Gastrocnemius medialis (tissue), 4 donors: ENCODE measurements at regions of chr3 and their contacts with region 1.

Region 1: GRCh38 chr3:193572426-193572908 is 17.8 kb upstream of the ATP13A4 start:
- DNase-seq: no peak
- ATAC-seq: peak; percentile 66 to 69
- H3K4me3 ChIP-seq: no peak overlapping the region
- H3K27ac ChIP-seq: no peak overlapping the region
- H3K4me1 ChIP-seq: no peaks in the 10 kb centered on the region
- H3K27me3 ChIP-seq: no peaks in the 10 kb centered on the region
- CTCF ChIP-seq: peak; percentile 31 to 75 (median 51)
- POLR2A ChIP-seq: no peak

Region 2: DNA sequence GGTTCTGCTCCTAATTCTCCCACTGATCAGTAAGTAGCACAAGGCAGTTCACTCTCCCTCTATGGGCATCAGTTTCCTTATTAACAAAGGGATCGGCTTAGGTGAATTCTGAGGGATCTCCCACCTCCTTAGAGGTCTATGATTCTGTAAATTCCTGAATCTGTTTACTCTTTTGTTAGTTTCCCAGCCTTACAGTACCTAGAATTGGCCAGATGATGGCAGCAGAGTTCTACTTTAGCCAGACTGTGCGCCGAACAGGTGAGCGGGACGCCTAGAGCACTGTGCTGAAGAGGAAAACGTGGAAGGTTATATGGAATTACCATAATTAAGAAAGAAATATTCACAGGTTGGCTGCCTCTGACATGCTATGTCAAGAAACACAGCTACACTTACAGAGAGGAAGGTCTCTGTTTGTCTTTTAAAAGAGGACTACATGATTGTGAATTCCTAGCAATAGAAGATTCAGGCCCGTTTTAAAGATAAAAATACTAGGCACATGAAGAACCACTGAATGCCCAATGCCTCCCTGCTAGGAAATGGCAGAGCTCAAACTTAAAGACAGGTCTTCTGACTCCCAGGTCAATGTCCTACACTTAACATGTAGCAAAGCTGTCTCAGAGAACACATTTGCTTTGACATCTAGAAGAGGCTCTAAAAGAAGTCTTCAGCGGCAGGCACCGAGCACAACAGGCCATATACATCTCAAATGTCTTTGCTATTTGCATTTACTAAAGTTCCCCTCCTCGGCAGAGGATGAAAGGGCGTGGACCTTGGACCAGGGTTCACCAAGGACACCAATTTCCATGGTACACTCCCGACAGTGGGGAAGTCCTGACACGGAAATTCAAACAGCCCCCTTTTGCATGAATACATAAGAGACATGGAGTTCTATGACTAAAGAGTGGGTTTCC is 1105.0 kb before region 1 on chr3:
- in situ Hi-C with region 1: loop called in 3 of 4 experiments (anchors 10 to 25 kb)
- intact Hi-C with region 1: no loop called
- DNase-seq: peak; percentile 11 to 19
- ATAC-seq: peak; percentile 62 to 74
- H3K4me3 ChIP-seq: no peak overlapping the region
- H3K27ac ChIP-seq: no peak overlapping the region
- H3K4me1 ChIP-seq: no peaks in the 10 kb centered on the region
- H3K27me3 ChIP-seq: no peaks in the 10 kb centered on the region
- CTCF ChIP-seq: peak; percentile 61 to 90 (median 73)
- POLR2A ChIP-seq: no peak

Region 3: DNA sequence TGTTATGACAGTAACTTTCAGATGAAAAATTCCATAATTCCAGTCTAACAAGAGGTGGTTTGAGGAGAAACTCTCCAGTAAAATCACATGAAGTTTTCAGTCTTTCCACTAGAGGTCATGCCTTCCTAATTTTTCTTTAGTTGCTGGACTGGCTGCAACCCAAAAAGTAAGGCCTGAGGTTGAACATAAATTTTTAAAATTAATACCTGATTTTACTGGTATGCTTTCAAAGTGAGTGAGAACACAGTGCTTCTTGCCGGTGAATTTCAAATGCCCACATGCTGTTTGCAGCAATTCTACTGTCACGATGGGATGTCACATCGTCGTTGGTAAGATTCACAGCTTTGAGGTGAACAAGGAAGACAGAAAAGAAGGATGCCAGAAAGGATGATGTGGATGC is 756.1 kb before region 1 on chr3:
- in situ Hi-C with region 1: loop called (anchors 5 to 10 kb)
- intact Hi-C with region 1: loop called (anchors 5 kb)
- DNase-seq: no peak
- ATAC-seq: peak in 1 of 2 donors; percentile 45
- H3K4me3 ChIP-seq: no peak overlapping the region
- H3K27ac ChIP-seq: no peak overlapping the region
- H3K4me1 ChIP-seq: peaks cover 4 to 16% of the 10 kb centered on the region in 2 donors
- H3K27me3 ChIP-seq: no peaks in the 10 kb centered on the region
- CTCF ChIP-seq: peak; percentile 58 to 76 (median 73)
- POLR2A ChIP-seq: no peak

Region 4: DNA sequence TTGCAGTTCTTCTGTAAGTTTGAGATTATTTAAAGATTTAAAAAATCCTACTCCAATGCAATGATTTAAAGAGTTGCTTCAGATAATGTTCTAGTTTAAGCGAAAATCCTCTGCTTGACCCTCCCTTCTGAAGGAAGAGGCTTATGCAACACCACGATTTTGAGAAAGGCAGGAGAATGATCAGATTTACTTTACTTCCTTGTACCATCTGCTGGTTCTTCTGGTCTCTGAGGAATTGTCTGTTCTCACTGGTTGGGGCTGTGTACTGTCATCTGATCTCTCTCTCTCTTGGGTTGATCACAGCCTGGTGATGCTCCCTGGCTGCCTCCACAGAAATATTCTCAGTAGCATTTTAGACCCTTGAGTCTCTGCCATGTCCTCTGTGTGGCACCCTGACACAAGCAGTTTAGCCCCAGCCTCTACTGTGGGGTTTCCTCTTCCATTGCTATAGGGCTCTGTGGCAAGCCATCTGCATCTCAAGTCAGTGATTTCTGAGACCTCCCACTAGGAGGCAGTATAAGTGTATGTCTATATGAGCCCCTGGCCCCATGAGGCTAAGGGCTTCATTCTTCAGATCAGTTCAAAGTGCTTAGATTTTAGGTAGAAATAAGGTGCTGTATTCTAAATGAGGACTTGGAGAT is 382.2 kb before region 1 on chr3:
- in situ Hi-C with region 1: loop called in 2 of 4 experiments (anchors 10 to 25 kb)
- intact Hi-C with region 1: loop called (anchors 2 kb)
- DNase-seq: peak in 1 of 2 donors; percentile 26
- ATAC-seq: peak; percentile 58 to 95
- H3K4me3 ChIP-seq: no peak overlapping the region
- H3K27ac ChIP-seq: no peak overlapping the region
- H3K4me1 ChIP-seq: peaks cover 0 to 5% of the 10 kb centered on the region in 2 donors
- H3K27me3 ChIP-seq: no peaks in the 10 kb centered on the region
- CTCF ChIP-seq: peak; percentile 32 to 55 (median 37)
- POLR2A ChIP-seq: no peak

Region 5: GRCh38 chr3:193465992-193466608 is 106.4 kb before region 1 on chr3:
- in situ Hi-C with region 1: loop called in 1 of 4 experiments (anchors 10 kb)
- intact Hi-C with region 1: loop called (anchors 10 kb)
- DNase-seq: no peak
- ATAC-seq: no peak
- H3K4me3 ChIP-seq: no peak overlapping the region
- H3K27ac ChIP-seq: no peak overlapping the region
- H3K4me1 ChIP-seq: peaks cover 0 to 3% of the 10 kb centered on the region in 2 donors
- H3K27me3 ChIP-seq: no peaks in the 10 kb centered on the region
- CTCF ChIP-seq: no peak
- POLR2A ChIP-seq: no peak

Region 6: DNA sequence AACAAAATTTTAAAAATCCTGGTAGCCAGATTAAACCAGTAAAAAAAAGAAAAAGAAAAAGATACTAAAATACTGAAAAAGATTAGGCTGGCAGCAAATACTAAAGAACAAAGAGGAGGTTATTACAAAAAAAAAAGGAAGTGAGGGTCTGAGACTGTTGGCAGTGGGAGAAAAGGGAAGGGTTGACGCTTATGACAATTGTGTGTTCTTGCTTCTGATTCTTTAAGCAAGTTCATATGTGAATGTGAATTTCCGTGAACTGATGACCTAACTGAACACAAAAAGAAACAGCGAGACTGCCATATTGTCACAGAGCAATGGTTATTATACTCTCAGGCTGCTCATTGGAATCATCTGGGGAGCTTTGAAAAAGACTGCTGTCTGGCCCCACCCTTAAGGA is 74.3 kb before region 1 on chr3:
- in situ Hi-C with region 1: no loop called
- intact Hi-C with region 1: no loop called
- DNase-seq: no peak
- ATAC-seq: no peak
- H3K4me3 ChIP-seq: no peak overlapping the region
- H3K27ac ChIP-seq: no peak overlapping the region
- H3K4me1 ChIP-seq: peaks cover 0 to 5% of the 10 kb centered on the region in 2 donors
- H3K27me3 ChIP-seq: no peaks in the 10 kb centered on the region
- CTCF ChIP-seq: no peak
- POLR2A ChIP-seq: no peak

Region 7: DNA sequence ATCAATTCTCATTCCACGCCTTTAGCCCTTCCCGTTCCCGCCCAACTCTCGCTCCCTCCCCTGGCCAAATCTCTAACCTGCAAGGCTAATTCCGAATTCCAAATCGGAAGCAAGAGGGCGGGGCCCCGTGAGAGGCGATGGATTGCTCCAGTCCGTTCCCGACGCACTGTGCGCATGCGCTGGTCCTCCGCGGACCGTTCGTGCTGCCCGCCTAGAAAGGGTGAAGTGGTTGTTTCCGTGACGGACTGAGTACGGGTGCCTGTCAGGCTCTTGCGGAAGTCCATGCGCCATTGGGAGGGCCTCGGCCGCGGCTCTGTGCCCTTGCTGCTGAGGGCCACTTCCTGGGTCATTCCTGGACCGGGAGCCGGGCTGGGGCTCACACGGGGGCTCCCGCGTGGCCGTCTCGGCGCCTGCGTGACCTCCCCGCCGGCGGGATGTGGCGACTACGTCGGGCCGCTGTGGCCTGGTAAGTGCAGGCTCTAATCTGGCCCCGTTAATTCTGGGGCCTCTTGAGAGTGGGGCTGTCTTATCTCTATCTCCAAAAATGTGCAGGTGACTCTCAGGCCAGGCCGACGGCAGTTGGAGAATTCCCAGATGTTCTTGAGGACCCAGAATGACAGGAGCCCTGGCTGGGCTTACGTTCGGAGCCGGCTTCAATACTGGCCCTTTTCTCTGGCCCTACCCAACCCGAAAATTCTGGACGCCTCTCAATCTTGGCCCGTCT is 20.6 kb after region 1 on chr3 and contains the start of gene OPA1:
- in situ Hi-C with region 1: no loop called
- intact Hi-C with region 1: no loop called
- DNase-seq: peak; percentile 95 to 97
- ATAC-seq: peak; percentile 96 to 97
- H3K4me3 ChIP-seq: peak within 1 kb of the TSS; percentile 87 to 98 (median 96)
- H3K27ac ChIP-seq: peak within 1 kb of the TSS; percentile 94 to 95 (median 95)
- H3K4me1 ChIP-seq: peaks cover 22% of the 10 kb centered on the region in 2 donors
- H3K27me3 ChIP-seq: no peaks in the 10 kb centered on the region
- CTCF ChIP-seq: peak in 4 of 5 experiments; percentile 27 to 49 (median 32)
- POLR2A ChIP-seq: peak; percentile 60 to 73
- total RNA-seq, gene OPA1: 59.8 to 78.2 (median 72.2) TPM

Region 8: GRCh38 chr3:194757647-194758061 is 1185.2 kb after region 1 on chr3:
- in situ Hi-C with region 1: no loop called
- intact Hi-C with region 1: no loop called
- DNase-seq: no peak
- ATAC-seq: peak; percentile 20 to 49
- H3K4me3 ChIP-seq: no peak overlapping the region
- H3K27ac ChIP-seq: no peak overlapping the region
- H3K4me1 ChIP-seq: peaks cover 9 to 12% of the 10 kb centered on the region in 2 donors
- H3K27me3 ChIP-seq: no peaks in the 10 kb centered on the region
- CTCF ChIP-seq: no peak
- POLR2A ChIP-seq: no peak